Right ventricle myocardium inferior (tissue), 1 donor: ENCODE measurements at regions of chr10 and their contacts with region 1.

Region 1: GRCh38 chr10:12710594-12711349 is 290.7 kb downstream of the CCDC3 start:
- DNase-seq: peak; percentile 75
- ATAC-seq: peak; percentile 81

Region 2: DNA sequence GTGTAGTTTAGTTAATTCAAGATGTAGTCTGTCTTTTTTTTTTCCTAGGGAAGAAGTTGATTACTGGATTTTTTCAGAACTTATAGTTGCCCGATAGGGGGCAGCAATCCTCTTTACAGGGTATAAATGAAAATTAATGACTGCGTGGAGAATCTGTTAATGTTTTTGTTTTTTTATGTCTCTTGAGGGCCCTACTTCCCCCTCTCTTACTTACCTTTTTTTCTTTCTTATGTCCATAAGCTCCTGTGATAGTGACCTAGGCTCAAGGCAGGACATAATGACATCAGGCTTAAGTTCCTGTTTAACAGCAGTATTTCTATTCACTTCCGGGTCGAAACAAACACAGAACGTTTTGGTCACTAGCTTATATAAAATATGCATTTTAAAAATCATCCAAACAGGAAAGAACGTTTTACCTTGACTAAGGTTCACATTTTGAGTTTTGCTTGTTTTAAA is 496.0 kb before region 1 on chr10:
- intact Hi-C with region 1: loop called (anchors 5 kb)
- DNase-seq: no peak
- ATAC-seq: no peak

Region 3: DNA sequence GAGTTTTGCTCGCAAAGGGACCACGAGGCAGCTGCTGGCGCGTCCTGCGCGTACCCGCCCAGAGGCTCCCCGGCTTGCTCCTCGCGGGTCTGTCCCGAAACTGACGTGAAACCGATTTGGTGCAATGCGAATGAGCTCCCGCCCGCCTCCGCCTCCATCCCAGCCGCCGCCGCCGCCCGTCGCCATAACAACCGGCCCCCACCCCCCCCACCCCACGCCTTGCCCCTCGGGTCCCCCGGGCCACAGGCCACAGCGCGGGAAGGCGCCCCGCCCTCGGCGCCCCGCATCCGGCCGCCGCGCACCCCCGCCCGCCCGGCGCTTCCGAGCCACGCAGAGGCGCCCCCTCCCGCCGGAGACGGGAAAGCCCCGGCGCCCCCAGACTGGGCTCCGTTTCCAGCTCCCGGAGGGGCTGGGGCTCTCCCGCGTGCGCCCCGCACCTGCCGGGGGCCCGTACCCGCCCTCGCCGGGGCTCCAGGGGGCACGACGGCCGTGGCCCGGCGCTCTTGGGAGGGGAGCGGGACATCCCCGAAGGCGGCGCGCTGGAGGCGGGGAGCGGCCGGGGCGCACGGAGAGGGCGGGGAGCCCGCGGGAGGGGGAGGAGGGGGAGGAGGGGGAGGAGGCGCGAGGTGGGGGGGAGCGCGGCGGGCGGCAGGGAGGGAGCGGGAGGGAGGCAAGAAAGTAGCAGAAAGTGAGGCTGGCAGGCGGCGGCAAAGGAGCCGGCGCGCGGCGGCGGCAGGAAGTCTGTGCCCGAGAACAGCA is 361.7 kb before region 1 on chr10 and contains the start of gene CAMK1D:
- intact Hi-C with region 1: loop called (anchors 5 kb)
- DNase-seq: peak; percentile 92
- ATAC-seq: peak; percentile 83
- total RNA-seq, gene CAMK1D: 5.2 TPM

Region 4: DNA sequence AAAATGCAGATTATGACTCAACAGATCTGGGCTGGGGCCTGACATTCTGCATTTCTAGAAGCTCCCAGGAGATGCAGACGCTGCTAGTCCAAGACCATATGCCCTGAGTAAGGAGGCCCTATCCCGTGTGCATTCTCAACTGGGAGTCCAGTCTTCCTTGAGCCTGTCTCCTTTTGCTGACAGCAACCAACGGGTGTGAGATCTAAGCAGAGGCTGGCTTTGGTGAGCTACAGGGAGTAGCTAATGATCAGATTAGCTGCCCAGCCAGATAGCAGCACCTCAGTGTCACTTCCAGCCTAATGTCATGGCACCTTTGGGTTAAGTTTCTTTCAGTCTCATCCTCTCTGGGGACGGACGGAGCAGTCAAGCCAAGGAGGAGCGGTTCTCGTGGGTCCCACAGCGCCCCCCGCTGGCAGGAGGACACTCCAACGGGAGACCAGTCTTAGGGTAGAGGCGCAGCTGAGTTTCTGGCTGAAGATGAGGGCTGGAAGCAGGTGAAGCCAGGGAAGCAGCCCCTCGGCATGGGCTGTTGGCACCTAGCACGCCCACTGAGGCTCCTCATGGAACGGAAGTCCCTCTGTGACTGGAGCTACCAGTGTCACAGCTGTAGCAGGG is 136.7 kb after region 1 on chr10:
- intact Hi-C with region 1: no loop called
- DNase-seq: no peak
- ATAC-seq: no peak

Region 5: DNA sequence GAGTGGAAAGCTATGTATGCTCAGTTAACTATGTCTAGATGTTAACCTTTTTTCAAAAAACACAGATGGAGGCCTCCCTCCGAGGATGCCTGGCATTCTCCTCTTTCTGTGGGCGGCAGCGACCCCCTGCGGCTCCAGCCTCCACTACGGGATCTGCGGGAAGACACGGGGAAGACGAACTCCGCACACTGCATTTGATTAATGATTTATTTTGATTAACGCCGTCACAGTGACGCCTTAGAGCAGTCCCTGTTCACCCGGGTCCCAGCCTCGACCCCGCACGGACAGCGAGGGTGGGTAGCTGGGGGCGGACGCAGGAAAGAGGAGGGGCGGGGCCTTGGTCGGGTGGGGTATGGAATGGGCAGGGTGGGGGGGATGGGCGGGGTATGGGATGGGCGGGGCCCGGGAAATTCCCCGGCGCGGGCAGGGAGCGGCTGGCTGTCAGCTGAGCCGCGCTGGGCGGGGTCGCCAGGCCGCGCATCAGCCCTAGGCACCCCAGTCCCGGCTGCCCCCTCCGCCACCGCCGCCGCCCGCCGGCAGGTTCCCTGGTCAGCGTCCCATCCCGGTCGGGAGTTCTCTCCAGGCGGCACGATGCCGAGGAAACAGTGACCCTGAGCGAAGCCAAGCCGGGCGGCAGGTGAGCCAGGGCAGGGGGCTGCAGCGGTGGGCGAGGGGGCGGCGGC is 389.0 kb after region 1 on chr10 and contains the start of gene OPTN:
- intact Hi-C with region 1: loop called (anchors 10 kb)
- DNase-seq: peak; percentile 85
- ATAC-seq: peak; percentile 91
- total RNA-seq, gene OPTN: 146 TPM